Pancreas (tissue), 10 donors: ENCODE measurements at regions of chr14 and their contacts with region 1.

Region 1: DNA sequence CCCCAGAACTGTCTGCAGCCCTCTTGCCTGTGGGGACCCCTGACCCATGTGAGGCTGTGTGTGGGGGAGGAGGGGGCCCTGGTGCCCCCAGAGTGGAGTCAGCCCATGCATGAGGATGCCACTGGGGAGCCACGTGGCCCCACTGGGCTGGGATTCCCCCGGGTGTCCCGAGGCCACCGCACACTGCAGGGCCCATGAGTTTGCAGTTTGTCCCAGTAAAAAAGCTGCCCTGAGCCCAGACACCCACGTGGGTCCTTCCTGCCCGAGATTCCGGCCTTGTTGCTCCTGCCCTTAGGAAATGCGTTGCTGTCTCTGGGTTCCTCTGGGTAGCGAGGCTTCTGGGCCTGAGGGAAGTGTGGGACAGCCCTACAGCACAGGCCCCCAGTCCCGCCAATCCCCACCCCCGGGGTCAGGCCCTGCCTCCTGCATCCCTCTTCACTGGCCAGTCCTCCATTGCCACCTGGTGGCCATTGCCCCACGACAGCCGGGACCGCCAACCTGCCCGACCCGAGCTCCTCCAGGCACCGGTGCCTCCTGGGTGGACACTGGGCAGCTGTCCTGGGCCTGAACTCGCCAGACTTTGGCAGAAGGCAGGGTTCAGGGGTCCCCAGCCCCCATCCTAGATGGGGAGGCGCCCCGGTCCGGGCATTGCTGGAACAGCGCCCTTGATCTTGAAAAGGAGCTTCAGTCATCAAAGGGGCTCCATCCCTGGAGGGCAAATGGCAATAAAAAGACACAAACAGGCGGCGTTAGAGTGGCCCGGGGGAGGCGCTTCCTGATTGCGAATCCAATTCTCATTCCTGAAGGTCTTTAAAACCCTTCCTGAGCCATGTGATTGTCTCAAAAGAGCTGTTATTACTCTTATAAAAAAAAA is 15.6 kb upstream of the C14orf180 start:
- DNase-seq: peak; percentile 57 to 92 (median 78)
- ATAC-seq: peak; percentile 88 to 97 (median 90)
- H3K4me3 ChIP-seq: no peak overlapping the region
- H3K27ac ChIP-seq: no peak overlapping the region
- H3K4me1 ChIP-seq: no peaks in the 10 kb centered on the region
- H3K27me3 ChIP-seq: peaks cover 0 to 7% (median 0%) of the 10 kb centered on the region in 4 donors
- CTCF ChIP-seq: peak; percentile 65 to 81 (median 74)

Region 2: GRCh38 chr14:104137297-104138097 is 426.5 kb before region 1 on chr14:
- intact Hi-C with region 1: loop called (anchors 2 to 10 kb)
- DNase-seq: peak; percentile 44 to 93 (median 79)
- ATAC-seq: peak; percentile 87 to 93 (median 91)
- H3K4me3 ChIP-seq: peak overlapping the region; percentile 33 to 51 (median 48)
- H3K27ac ChIP-seq: no peak overlapping the region
- H3K4me1 ChIP-seq: peaks cover 4 to 9% (median 5%) of the 10 kb centered on the region in 3 donors
- H3K27me3 ChIP-seq: peaks cover 0 to 14% (median 3%) of the 10 kb centered on the region in 4 donors
- CTCF ChIP-seq: peak; percentile 91 to 94 (median 93)

Region 3: GRCh38 chr14:104149617-104150135 is 414.3 kb before region 1 on chr14:
- intact Hi-C with region 1: loop called in 1 of 3 experiments (anchors 10 kb)
- DNase-seq: peak in 3 of 6 donors; percentile 47 to 69 (median 62)
- ATAC-seq: peak in 3 of 4 donors; percentile 20 to 56 (median 52)
- H3K4me3 ChIP-seq: peak overlapping the region in 1 of 4 donors; percentile 12
- H3K27ac ChIP-seq: peak overlapping the region in 2 of 4 donors; percentile 8 to 60
- H3K4me1 ChIP-seq: peaks cover 0 to 22% (median 5%) of the 10 kb centered on the region in 3 donors
- H3K27me3 ChIP-seq: no peaks in the 10 kb centered on the region
- CTCF ChIP-seq: no peak